ENCODE measurements at regions of chr6 and their contacts with region 1.

Region 1: GRCh38 chr6:27893059-27893835 is 18.9 kb downstream of the OR2B2 start:
- DNase-seq: peak; percentile 95
- H3K4me3 ChIP-seq: peak overlapping the region; percentile 59
- H3K27ac ChIP-seq: peak overlapping the region; percentile 89
- H3K4me1 ChIP-seq: no peaks in the 10 kb centered on the region
- H3K27me3 ChIP-seq: no peaks in the 10 kb centered on the region
- CTCF ChIP-seq: no peak

Region 2: DNA sequence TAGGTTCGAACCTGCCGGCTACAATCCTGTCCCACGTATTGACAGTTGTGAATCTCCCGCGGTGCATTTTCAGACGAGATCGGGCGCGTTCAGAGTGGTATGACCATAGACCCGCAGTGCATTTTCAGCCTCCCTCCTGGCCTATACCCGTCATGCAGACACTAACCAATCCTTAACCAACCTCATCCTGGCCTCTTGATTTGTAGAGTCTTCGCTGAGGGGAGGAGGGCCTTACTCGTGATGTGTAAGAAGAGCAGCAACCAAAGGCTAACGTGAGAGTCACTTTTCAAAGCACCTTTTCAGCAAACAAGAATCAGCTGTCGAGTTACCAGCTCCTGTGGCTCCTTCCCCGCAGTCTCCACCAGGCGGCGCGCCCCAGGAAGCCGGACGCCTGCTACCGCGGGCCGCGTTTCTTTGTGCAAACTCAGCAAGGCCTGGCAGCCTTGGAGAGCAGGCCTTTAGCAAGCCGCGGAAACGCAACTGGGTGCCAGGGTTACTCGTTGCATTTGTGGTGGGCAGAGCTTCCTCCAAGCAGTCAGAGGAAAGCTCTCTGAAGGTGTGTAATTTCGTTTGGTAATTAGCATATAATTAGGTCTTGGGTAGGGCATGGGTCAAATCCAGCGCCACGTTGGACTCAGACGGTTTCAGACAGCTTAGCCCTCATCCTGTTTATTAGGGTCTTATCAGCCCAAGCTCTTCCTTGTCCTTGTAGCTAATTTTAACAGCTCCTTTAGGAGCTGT is 120.8 kb before region 1 on chr6:
- intact Hi-C with region 1: loop called (anchors 5 kb)
- DNase-seq: peak; percentile 91
- H3K4me3 ChIP-seq: no peak overlapping the region
- H3K27ac ChIP-seq: peak overlapping the region; percentile 28
- H3K4me1 ChIP-seq: no peaks in the 10 kb centered on the region
- H3K27me3 ChIP-seq: no peaks in the 10 kb centered on the region
- CTCF ChIP-seq: peak; percentile 92

Region 3: GRCh38 chr6:27795697-27796494 is 97.4 kb before region 1 on chr6:
- intact Hi-C with region 1: loop called (anchors 5 kb)
- DNase-seq: peak; percentile 88
- H3K4me3 ChIP-seq: no peak overlapping the region
- H3K27ac ChIP-seq: no peak overlapping the region
- H3K4me1 ChIP-seq: peaks cover 8% of the 10 kb centered on the region
- H3K27me3 ChIP-seq: no peaks in the 10 kb centered on the region
- CTCF ChIP-seq: peak; percentile 88

Region 4: GRCh38 chr6:27847706-27848105 is 45.5 kb before region 1 on chr6:
- intact Hi-C with region 1: no loop called
- DNase-seq: no peak
- H3K4me3 ChIP-seq: no peak overlapping the region
- H3K27ac ChIP-seq: no peak overlapping the region
- H3K4me1 ChIP-seq: no peaks in the 10 kb centered on the region
- H3K27me3 ChIP-seq: no peaks in the 10 kb centered on the region
- CTCF ChIP-seq: no peak

Measured in colonic mucosa (tissue), 4 donors.